Activated T-helper 1 cell treated with anti-CD3 and anti-CD28 coated beads, Interleukin-12 subunit alpha, Interleukin-12 subunit beta, Interleukin-2, Interleukin-4 antibody, amounts not matched to agents 30 ng/mL and 10 ng/mL and 1 ng/mL, durations not matched to agents 14 hours and 24 hours and 36 hours (primary cell): ENCODE measurements at regions of chr2 and their contacts with region 1.

Region 1: DNA sequence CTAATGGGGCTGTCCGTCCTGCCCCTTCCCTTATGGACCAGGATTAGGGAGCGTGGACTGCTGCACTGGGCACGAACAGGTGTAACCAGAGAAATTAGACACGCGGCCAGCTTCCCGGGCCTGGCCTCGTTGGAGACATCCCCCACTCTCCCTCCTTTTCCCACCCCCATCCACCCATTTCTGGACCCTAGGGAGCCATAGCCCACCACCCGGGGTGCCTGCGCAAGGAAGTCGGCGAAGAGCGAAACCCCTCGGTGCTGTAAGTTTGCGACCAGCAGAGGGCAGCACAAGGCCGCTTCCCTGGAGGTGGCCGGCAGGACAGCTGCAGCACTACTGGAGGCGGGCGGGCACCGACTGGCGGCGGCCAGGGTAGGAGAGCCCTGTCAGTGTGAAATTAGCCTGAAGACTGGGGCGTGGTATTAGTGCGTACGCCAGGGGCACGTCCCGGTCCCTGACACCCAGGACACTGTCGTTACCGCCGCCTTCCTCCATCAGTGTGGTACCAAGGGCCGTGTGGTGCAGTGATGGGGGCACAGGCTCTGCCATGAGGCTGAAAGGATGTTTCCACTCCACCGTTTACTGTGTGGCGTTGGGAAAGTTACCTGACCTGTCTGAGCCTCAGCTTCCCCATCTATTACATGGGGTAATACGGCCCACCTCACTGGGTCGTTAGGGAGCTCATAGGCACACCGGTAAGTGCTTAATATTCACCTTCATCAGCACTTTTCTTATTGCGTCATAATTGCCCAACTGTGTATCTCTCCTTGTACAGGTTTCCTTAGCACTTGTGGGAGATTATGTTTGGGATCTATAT is 36.0 kb upstream of the CD207 start:
- DNase-seq: peak; percentile 72
- H3K4me3 Mint-ChIP-seq: peak overlapping the region; percentile 15
- H3K27ac Mint-ChIP-seq: no peak overlapping the region
- H3K4me1 Mint-ChIP-seq: peaks cover 7% of the 10 kb centered on the region
- H3K27me3 Mint-ChIP-seq: peaks cover 10% of the 10 kb centered on the region

Region 2: GRCh38 chr2:70919672-70920366 is 48.2 kb after region 1 on chr2:
- intact Hi-C with region 1: loop called (anchors 1 kb)
- DNase-seq: peak; percentile 65
- H3K4me3 Mint-ChIP-seq: no peak overlapping the region
- H3K27ac Mint-ChIP-seq: no peak overlapping the region
- H3K4me1 Mint-ChIP-seq: no peaks in the 10 kb centered on the region
- H3K27me3 Mint-ChIP-seq: peaks cover 19% of the 10 kb centered on the region

Region 3: GRCh38 chr2:70948337-70949003 is 76.9 kb after region 1 on chr2:
- intact Hi-C with region 1: loop called (anchors 1 kb)
- DNase-seq: peak; percentile 67
- H3K4me3 Mint-ChIP-seq: peak overlapping the region; percentile 81
- H3K27ac Mint-ChIP-seq: no peak overlapping the region
- H3K4me1 Mint-ChIP-seq: peaks cover 16% of the 10 kb centered on the region
- H3K27me3 Mint-ChIP-seq: peaks cover 32% of the 10 kb centered on the region